B cell (primary cell): ENCODE measurements at regions of chr17 and their contacts with region 1.

Region 1: GRCh38 chr17:48351831-48352332 is 78.1 kb downstream of the SKAP1 start:
- DNase-seq: peak; percentile 65
- ATAC-seq: peak; percentile 28
- H3K4me3 ChIP-seq: no peak overlapping the region
- H3K4me3 Mint-ChIP-seq: no peak overlapping the region
- H3K27ac ChIP-seq: no peak overlapping the region
- H3K27ac Mint-ChIP-seq: no peak overlapping the region
- H3K4me1 ChIP-seq: peaks cover 3% of the 10 kb centered on the region in 2 donors
- H3K4me1 Mint-ChIP-seq: peaks cover 4% of the 10 kb centered on the region
- H3K27me3 ChIP-seq: no peaks in the 10 kb centered on the region
- H3K27me3 Mint-ChIP-seq: no peaks in the 10 kb centered on the region
- CTCF ChIP-seq: peak; percentile 95

Region 2: GRCh38 chr17:48307814-48308411 is 44.0 kb before region 1 on chr17:
- CTCF ChIA-PET with region 1: interaction called, 19 read pairs
- POLR2A ChIA-PET with region 1: no interaction called
- intact Hi-C with region 1: no loop called
- DNase-seq: peak; percentile 70
- ATAC-seq: peak; percentile 72
- H3K4me3 ChIP-seq: no peak overlapping the region
- H3K4me3 Mint-ChIP-seq: no peak overlapping the region
- H3K27ac ChIP-seq: no peak overlapping the region
- H3K27ac Mint-ChIP-seq: no peak overlapping the region
- H3K4me1 ChIP-seq: no peaks in the 10 kb centered on the region
- H3K4me1 Mint-ChIP-seq: peaks cover 3% of the 10 kb centered on the region
- H3K27me3 ChIP-seq: no peaks in the 10 kb centered on the region
- H3K27me3 Mint-ChIP-seq: peaks cover 4% of the 10 kb centered on the region
- CTCF ChIP-seq: peak; percentile 88

Region 3: GRCh38 chr17:48363161-48363560 is 11.3 kb after region 1 on chr17:
- CTCF ChIA-PET with region 1: interaction called, 21 read pairs
- POLR2A ChIA-PET with region 1: no interaction called
- intact Hi-C with region 1: no loop called
- DNase-seq: no peak
- ATAC-seq: no peak
- H3K4me3 ChIP-seq: no peak overlapping the region
- H3K4me3 Mint-ChIP-seq: no peak overlapping the region
- H3K27ac ChIP-seq: no peak overlapping the region
- H3K27ac Mint-ChIP-seq: no peak overlapping the region
- H3K4me1 ChIP-seq: peaks cover 6 to 7% of the 10 kb centered on the region in 2 donors
- H3K4me1 Mint-ChIP-seq: peaks cover 10% of the 10 kb centered on the region
- H3K27me3 ChIP-seq: no peaks in the 10 kb centered on the region
- H3K27me3 Mint-ChIP-seq: no peaks in the 10 kb centered on the region
- CTCF ChIP-seq: no peak

Region 4: DNA sequence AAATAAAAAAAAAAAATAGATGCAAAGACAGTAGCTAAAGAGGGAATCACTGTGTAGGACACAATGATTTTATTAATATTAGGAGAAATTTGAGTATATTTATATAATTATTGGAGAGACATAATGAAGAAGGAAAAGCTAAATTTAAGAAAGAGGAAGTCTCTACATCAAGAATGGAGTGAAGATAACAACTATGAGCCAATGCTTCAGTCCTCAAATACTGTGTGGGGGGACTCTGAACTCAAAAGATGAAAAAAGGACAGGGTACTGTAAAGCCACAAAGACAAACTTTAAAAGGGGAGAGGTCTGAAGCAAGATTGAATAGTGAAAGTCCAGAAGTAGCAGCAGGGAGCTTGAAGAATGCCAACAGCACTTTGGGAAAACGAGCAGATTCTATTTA is 33.4 kb after region 1 on chr17:
- CTCF ChIA-PET with region 1: interaction called, 11 read pairs
- POLR2A ChIA-PET with region 1: no interaction called
- intact Hi-C with region 1: no loop called
- DNase-seq: no peak
- ATAC-seq: no peak
- H3K4me3 ChIP-seq: no peak overlapping the region
- H3K4me3 Mint-ChIP-seq: no peak overlapping the region
- H3K27ac ChIP-seq: no peak overlapping the region
- H3K27ac Mint-ChIP-seq: no peak overlapping the region
- H3K4me1 ChIP-seq: peaks cover 20% of the 10 kb centered on the region in 2 donors
- H3K4me1 Mint-ChIP-seq: peaks cover 31% of the 10 kb centered on the region
- H3K27me3 ChIP-seq: no peaks in the 10 kb centered on the region
- H3K27me3 Mint-ChIP-seq: peaks cover 4% of the 10 kb centered on the region
- CTCF ChIP-seq: no peak

Region 5: GRCh38 chr17:48457080-48457836 is 105.4 kb after region 1 on chr17:
- CTCF ChIA-PET with region 1: interaction called, 108 read pairs
- POLR2A ChIA-PET with region 1: no interaction called
- intact Hi-C with region 1: loop called (anchors 1 kb)
- DNase-seq: peak; percentile 89
- ATAC-seq: peak; percentile 96
- H3K4me3 ChIP-seq: peak overlapping the region in 1 of 5 experiments; percentile 20
- H3K4me3 Mint-ChIP-seq: peak overlapping the region; percentile 17
- H3K27ac ChIP-seq: no peak overlapping the region
- H3K27ac Mint-ChIP-seq: peak overlapping the region; percentile 15
- H3K4me1 ChIP-seq: peaks cover 35 to 41% of the 10 kb centered on the region in 2 donors
- H3K4me1 Mint-ChIP-seq: peaks cover 39% of the 10 kb centered on the region
- H3K27me3 ChIP-seq: peaks cover 0 to 8% (median 0%) of the 10 kb centered on the region in 4 experiments
- H3K27me3 Mint-ChIP-seq: peaks cover 8% of the 10 kb centered on the region
- CTCF ChIP-seq: peak; percentile 98

Region 6: DNA sequence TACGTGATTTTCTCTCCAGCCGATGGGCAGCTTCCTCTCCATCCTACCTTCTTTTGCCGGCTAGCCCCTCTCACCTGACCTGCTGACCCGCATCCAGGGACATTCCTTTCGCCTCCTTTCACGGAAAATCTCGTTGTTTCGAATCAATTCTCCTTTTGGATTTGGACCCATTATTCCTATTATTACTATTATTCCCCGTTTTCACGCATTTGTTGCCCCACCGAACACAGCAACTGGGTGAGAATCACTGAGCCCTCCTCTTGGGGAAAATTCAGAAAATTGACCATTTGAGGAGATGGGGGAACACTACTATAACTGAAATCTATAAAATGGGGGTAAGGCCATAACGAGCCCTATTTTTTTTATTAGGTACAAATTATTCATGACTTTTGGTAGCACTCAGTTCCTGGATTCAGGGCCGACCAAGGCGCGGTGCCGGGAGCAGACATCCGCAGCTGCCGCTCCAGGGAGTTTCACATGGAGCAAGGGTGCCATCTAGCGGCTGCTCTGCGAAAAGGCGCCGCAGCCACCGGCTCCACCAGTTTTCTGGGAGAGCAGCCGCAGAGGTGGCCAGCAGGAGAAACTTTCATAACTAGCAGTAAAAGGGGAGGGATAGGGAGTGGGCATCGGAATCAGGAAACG is 266.5 kb after region 1 on chr17:
- CTCF ChIA-PET with region 1: interaction called, 11 read pairs
- POLR2A ChIA-PET with region 1: no interaction called
- intact Hi-C with region 1: no loop called
- DNase-seq: peak; percentile 87
- ATAC-seq: peak; percentile 71
- H3K4me3 ChIP-seq: no peak overlapping the region
- H3K4me3 Mint-ChIP-seq: no peak overlapping the region
- H3K27ac ChIP-seq: no peak overlapping the region
- H3K27ac Mint-ChIP-seq: peak overlapping the region; percentile 74
- H3K4me1 ChIP-seq: peaks cover 33 to 51% of the 10 kb centered on the region in 2 donors
- H3K4me1 Mint-ChIP-seq: peaks cover 28% of the 10 kb centered on the region
- H3K27me3 ChIP-seq: peaks cover 0 to 97% (median 72%) of the 10 kb centered on the region in 4 experiments
- H3K27me3 Mint-ChIP-seq: peaks cover 86% of the 10 kb centered on the region
- CTCF ChIP-seq: peak; percentile 97

Region 7: GRCh38 chr17:48944519-48945260 is 592.8 kb after region 1 on chr17 and contains the start of gene SNF8:
- CTCF ChIA-PET with region 1: no interaction called
- POLR2A ChIA-PET with region 1: no interaction called
- intact Hi-C with region 1: no loop called
- DNase-seq: peak; percentile 93
- ATAC-seq: peak; percentile 92
- H3K4me3 ChIP-seq: peak within 1 kb of the TSS; percentile 80 to 99 (median 91)
- H3K4me3 Mint-ChIP-seq: peak within 1 kb of the TSS; percentile 93
- H3K27ac ChIP-seq: peak within 1 kb of the TSS; percentile 87 to 97
- H3K27ac Mint-ChIP-seq: peak within 1 kb of the TSS; percentile 93
- H3K4me1 ChIP-seq: peaks cover 12 to 21% of the 10 kb centered on the region in 2 donors
- H3K4me1 Mint-ChIP-seq: peaks cover 15% of the 10 kb centered on the region
- H3K27me3 ChIP-seq: no peaks in the 10 kb centered on the region
- H3K27me3 Mint-ChIP-seq: no peaks in the 10 kb centered on the region
- CTCF ChIP-seq: no peak
- total RNA-seq, gene SNF8: 77.5 and 81.9 TPM in 2 replicates